Common myeloid progenitor, CD34-positive (primary cell): ENCODE measurements at regions of chr11 and their contacts with region 1.

Region 1: GRCh38 chr11:57249384-57250319 is 12.6 kb upstream of the APLNR start:
- DNase-seq: peak; percentile 51 to 76 (median 66)
- H3K4me3 ChIP-seq: no peak overlapping the region
- H3K27ac ChIP-seq: no peak overlapping the region
- H3K4me1 ChIP-seq: peaks cover 0 to 14% (median 2%) of the 10 kb centered on the region in 4 experiments
- H3K27me3 ChIP-seq: peaks cover 0 to 51% (median 20%) of the 10 kb centered on the region in 5 experiments

Region 2: GRCh38 chr11:56841210-56841810 is 408.3 kb before region 1 on chr11:
- CTCF ChIA-PET with region 1: interaction called, 94 read pairs
- POLR2A ChIA-PET with region 1: no interaction called
- DNase-seq: peak; percentile 38 to 61 (median 48)
- H3K4me3 ChIP-seq: no peak overlapping the region
- H3K27ac ChIP-seq: no peak overlapping the region
- H3K4me1 ChIP-seq: peaks cover 0 to 2% (median under 1%) of the 10 kb centered on the region in 4 experiments
- H3K27me3 ChIP-seq: peaks cover 0 to 8% (median 0%) of the 10 kb centered on the region in 5 experiments

Region 3: DNA sequence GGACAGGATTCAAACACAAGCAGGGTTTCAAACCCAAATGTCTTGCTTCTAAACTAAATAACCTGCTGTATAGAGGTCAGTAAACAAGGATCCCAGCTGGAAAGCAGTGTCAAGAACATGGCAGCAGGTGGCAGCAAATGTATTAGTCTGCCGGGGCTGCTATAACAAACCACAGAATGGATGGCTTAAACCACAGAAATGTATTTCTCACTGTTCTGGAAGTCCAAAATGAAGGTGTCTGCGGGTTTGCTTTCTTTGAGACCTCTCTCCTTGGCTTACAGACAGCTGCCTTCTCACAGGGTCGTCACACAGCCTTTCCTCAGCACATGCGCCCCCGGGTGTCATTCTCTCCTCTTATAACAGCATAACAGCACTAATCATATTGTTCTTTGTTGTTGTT is 133.0 kb before region 1 on chr11:
- CTCF ChIA-PET with region 1: interaction called, 104 read pairs
- POLR2A ChIA-PET with region 1: no interaction called
- DNase-seq: peak; percentile 31 to 70 (median 65)
- H3K4me3 ChIP-seq: no peak overlapping the region
- H3K27ac ChIP-seq: no peak overlapping the region
- H3K4me1 ChIP-seq: no peaks in the 10 kb centered on the region
- H3K27me3 ChIP-seq: peaks cover 0 to 49% (median 7%) of the 10 kb centered on the region in 5 experiments

Region 4: GRCh38 chr11:57131080-57131790 is 118.4 kb before region 1 on chr11:
- CTCF ChIA-PET with region 1: interaction called, 45 read pairs
- POLR2A ChIA-PET with region 1: no interaction called
- DNase-seq: no peak
- H3K4me3 ChIP-seq: no peak overlapping the region
- H3K27ac ChIP-seq: no peak overlapping the region
- H3K4me1 ChIP-seq: no peaks in the 10 kb centered on the region
- H3K27me3 ChIP-seq: peaks cover 0 to 82% (median 31%) of the 10 kb centered on the region in 5 experiments

Region 5: DNA sequence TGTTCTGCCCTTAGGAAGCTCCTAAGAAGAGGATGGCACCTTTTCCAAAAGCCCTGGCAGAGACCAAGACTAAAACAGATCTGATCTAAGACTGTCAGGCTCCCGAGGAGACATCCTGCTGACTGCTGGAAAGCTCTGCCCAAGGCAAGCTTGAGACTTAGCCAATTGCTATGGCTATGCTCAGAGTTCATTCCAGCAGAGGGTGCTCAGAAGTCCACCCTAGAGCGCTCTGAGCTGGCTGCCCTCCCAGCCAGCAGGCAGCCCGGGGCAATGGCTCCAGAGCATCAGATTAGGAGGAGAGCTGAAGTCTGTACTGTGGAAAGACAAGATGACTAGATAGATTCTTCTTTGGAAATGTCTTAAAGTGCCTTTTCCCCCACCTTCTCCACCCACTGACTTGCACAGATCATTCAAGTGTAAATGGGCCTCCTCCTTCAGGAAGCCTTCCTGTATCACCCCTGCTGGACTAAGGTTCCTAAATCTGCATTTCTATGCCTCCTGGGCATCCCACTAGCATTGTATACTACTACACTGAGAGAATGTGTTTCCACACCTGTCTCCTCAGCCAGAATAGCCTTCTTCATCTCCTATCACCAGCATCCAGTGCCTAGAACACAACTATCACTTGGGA is 44.5 kb before region 1 on chr11:
- CTCF ChIA-PET with region 1: interaction called, 11 read pairs
- POLR2A ChIA-PET with region 1: no interaction called
- DNase-seq: no peak
- H3K4me3 ChIP-seq: no peak overlapping the region
- H3K27ac ChIP-seq: no peak overlapping the region
- H3K4me1 ChIP-seq: no peaks in the 10 kb centered on the region
- H3K27me3 ChIP-seq: peaks cover 7 to 84% (median 21%) of the 10 kb centered on the region in 5 experiments

Region 6: DNA sequence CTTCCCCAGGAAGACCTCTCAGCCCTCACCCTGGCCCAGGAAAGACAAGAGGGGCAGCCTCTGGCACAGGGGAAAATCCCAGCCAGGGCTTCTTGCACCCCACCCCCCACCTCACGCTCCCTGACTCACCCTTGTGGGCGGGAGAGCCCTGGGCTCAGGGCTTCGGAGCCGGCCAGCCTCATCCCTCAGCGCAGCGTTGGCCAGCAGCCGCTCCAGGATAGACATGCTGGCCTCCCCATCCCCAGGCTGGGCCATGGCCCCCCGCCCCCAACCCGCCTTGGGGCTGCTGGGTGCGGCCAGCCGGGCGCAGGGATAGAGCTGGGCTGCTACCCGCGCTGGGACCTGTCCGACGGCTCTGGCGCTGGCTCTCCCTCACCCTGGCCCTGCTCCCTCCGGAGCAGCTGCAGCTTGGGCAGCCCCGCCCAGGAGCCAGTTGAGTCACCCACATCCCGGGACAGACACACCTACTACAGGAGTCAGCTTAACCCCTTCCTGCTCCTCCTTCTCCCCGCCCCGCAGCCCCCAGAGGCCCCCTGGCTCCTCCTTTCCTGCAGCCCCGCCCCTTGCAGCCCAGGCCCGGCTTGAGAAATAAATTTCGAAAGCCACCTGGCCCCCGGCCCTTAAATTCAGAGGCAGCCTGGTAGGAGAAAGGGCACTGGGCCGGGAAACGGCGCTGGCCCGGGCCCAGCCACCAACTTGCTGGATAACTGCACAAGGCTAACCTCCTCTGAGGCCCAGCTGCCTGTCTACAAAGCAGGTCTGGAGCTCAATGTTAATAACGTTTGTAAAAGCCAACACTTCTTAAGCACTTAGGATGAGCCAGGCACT is 61.7 kb after region 1 on chr11:
- CTCF ChIA-PET with region 1: no interaction called
- POLR2A ChIA-PET with region 1: no interaction called
- DNase-seq: peak; percentile 76 to 82 (median 79)
- H3K4me3 ChIP-seq: peak overlapping the region in 6 of 7 experiments; percentile 42 to 76 (median 52)
- H3K27ac ChIP-seq: no peak overlapping the region
- H3K4me1 ChIP-seq: peaks cover 9 to 47% (median 30%) of the 10 kb centered on the region in 4 experiments
- H3K27me3 ChIP-seq: no peaks in the 10 kb centered on the region

Region 7: GRCh38 chr11:57588046-57588710 is 338.5 kb after region 1 on chr11:
- CTCF ChIA-PET with region 1: no interaction called
- POLR2A ChIA-PET with region 1: no interaction called
- DNase-seq: peak in 2 of 3 donors; percentile 69 to 79
- H3K4me3 ChIP-seq: no peak overlapping the region
- H3K27ac ChIP-seq: no peak overlapping the region
- H3K4me1 ChIP-seq: peaks cover 5 to 31% (median 25%) of the 10 kb centered on the region in 4 experiments
- H3K27me3 ChIP-seq: no peaks in the 10 kb centered on the region